AG04449 (cell line): ENCODE measurements at regions of chr2 and their contacts with region 1.

Region 1: DNA sequence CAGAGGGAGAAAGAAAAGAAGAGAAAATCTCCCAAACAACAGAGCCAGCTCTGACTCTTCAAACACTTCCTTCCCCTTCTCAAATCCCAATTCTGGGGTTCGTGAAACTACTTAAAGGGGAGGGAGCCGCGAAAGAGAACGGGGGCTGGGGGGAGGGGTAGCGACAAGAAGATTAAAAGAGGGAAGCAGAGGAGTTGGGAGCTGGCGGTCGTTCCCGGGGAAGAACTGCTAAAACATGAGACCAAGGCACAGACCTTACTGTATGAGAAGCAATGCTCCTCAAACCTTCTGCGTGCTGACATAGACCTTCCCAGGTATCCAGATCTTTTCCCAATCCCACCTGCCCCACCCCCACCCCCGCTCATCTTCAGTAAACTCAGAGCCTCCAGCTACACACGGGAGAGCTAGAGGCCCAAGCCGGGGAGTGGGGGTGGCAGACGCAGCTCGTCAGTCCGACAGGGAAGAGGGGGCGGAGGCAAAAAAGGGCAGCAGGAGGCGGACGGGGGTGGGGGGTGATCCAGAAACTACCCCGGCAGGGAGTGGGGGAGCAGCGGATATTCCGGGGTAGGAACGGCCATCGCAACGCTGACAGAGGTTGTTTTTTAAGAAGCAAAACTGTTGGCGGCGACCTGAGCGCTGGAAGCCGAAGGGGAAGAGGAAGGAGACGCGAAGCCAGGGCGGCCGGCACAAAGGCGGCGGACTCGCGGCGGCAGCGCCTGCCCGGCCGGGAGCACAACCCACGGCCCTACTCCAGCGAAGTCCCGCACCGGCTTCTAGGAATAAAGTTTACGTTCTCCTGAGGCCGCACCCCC is 1.0 kb downstream of the BAZ2B start:
- DNase-seq: no peak
- H3K4me3 ChIP-seq: peak overlapping the region; percentile 71
- CTCF ChIP-seq: no peak

Region 2: DNA sequence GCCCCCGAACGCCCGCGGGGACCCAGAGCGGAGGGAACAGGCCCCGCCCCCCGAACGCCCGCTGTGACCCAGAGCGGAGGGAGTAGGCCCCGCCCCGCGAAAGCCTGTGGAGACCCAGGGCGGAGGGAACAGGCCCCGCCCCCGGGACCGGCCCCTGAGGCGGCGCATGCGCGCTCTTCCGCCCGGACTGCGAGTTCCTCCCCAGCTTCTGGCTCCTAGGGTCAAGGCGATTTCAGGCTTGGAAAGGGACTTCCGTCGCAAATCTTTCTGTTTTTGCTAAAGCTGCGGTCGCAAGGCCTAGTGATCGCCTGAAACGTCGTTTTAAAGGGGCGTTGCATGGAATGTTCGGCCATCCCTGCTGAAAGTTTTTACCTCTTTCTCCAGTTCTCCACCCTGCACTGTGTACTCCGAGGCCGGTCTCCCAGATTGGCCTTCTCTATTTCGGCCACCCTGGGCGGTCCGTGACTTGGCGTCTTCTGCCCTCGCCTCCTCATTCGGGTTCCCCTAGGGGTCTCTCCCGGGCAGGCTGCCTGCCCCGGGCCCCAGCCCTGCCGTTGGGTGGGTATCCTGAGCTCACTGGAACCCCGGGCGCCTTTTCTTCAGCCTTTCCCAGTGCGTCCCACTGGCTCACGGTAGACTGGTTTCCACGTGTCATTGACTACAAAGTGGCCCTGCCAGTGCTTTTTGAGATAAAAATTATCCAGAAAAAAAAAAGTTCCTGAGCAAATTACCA is 328.5 kb before region 1 on chr2:
- CTCF ChIA-PET with region 1: no interaction called
- POLR2A ChIA-PET with region 1: no interaction called
- DNase-seq: peak; percentile 55
- H3K4me3 ChIP-seq: peak overlapping the region; percentile 86
- CTCF ChIP-seq: no peak

Region 3: DNA sequence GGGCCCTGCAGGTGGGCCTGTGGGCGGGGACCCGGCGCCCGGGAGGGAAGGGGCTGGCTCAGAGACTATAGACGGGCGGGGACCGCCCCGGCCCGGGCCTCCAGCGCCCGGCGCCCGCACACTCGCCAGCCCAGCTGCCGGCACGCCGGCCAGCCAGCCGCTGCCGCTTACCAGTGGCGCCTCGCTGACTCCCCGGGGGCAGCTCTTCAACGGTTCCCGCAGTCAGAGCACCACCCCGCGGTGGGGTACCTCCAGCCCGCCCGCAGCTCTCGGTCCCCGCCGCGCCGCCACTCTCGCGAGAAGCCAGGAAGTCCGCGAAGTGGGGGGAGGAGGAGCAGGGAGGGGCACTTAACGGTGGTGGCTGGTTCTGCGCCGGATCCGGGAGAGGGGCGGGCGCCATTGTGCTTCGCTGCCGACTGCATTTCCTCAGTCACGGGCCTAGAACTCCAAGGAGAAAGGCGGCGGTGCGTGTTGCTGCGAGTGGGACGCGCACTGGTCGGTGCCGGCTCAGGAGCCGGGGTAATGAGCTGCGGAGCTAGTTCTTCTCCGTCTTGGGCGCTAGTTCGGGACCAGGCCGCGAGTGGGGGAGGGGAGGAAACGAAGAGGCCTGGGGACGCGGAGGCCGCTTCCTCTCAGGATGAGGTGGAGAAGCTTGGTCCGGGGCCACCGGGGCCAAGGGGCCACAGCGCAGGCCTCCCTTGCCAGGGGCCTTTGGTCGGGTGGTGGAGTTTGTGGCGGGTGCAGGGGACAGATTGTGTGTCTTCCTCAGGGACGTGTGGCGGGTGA is 97.0 kb after region 1 on chr2 and contains the start of gene MARCHF7:
- CTCF ChIA-PET with region 1: no interaction called
- POLR2A ChIA-PET with region 1: interaction called, 18 read pairs
- DNase-seq: peak; percentile 58
- H3K4me3 ChIP-seq: peak within 1 kb of the TSS; percentile 99
- CTCF ChIP-seq: peak; percentile 74